ENCODE measurements at regions of chr5 and their contacts with region 1.

Region 1: DNA sequence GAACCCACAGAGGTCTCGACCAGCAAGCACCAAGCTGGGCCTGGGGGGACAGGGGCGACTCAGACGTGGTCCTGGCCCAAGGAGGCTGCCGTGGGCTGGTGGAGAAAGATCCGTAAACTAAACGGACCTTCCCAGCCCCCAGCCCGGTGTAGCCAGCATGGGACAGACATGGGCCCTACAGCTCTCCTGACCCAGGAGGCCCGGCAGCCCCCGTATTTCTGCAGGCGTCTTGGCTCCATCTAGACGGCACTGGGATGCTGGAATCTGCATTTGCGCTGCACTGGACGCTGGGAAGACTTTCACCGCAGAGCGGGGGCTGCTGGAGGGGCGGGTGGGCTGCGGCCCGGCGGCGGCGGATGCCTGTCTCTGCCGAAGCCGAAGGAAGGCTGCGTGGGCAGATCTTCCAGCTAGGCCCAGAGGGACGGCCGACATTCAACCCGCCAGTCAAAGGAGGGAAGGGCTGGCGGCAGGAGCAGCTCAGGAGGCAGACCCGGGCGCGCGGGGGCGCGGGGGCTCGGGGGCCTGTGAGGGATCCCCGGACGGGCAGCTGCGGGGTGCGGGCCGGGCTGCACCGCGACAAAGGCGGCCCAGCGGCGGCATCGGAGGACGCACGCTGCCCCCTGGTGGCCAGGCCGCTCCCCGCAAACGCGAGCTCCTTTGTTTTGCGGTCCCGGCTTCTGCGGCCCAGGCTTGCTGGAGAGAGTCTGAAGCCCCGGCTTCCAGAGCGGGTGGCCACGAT is 266.2 kb downstream of the NSG2 start:
- DNase-seq: peak; percentile 10
- ATAC-seq: peak; percentile 92
- H3K4me3 ChIP-seq: peak overlapping the region in 1 of 3 experiments; percentile 40; a peak in 1 of 6 replicates
- H3K27ac ChIP-seq: no peak overlapping the region
- H3K4me1 ChIP-seq: no peaks in the 10 kb centered on the region
- H3K27me3 ChIP-seq: peaks cover 6 to 58% of the 10 kb centered on the region in 2 experiments; a peak in 4 of 5 replicates
- CTCF ChIP-seq: peak; percentile 86
- EP300 ChIP-seq: no peak
- POLR2A ChIP-seq: no peak
- RAD21 ChIP-seq: peak; percentile 90

Region 2: GRCh38 chr5:173615884-173616576 is 695.7 kb before region 1 on chr5:
- CTCF ChIA-PET with region 1: no interaction called
- POLR2A ChIA-PET with region 1: no interaction called
- in situ Hi-C with region 1: loop called (anchors 10 kb)
- intact Hi-C with region 1: loop called (anchors 2 kb)
- DNase-seq: peak; percentile 76
- ATAC-seq: peak; percentile 78
- H3K4me3 ChIP-seq: peak overlapping the region; percentile 83 to 92 (median 86)
- H3K27ac ChIP-seq: peak overlapping the region; percentile 79
- H3K4me1 ChIP-seq: peaks cover 61% of the 10 kb centered on the region
- H3K27me3 ChIP-seq: no peaks in the 10 kb centered on the region; a peak in 1 of 5 replicates
- CTCF ChIP-seq: peak; percentile 57
- EP300 ChIP-seq: no peak
- POLR2A ChIP-seq: peak in 1 of 2 experiments; percentile 41; a peak in 1 of 4 replicates
- RAD21 ChIP-seq: no peak; the same call in 1 of the 2 replicates

Region 3: DNA sequence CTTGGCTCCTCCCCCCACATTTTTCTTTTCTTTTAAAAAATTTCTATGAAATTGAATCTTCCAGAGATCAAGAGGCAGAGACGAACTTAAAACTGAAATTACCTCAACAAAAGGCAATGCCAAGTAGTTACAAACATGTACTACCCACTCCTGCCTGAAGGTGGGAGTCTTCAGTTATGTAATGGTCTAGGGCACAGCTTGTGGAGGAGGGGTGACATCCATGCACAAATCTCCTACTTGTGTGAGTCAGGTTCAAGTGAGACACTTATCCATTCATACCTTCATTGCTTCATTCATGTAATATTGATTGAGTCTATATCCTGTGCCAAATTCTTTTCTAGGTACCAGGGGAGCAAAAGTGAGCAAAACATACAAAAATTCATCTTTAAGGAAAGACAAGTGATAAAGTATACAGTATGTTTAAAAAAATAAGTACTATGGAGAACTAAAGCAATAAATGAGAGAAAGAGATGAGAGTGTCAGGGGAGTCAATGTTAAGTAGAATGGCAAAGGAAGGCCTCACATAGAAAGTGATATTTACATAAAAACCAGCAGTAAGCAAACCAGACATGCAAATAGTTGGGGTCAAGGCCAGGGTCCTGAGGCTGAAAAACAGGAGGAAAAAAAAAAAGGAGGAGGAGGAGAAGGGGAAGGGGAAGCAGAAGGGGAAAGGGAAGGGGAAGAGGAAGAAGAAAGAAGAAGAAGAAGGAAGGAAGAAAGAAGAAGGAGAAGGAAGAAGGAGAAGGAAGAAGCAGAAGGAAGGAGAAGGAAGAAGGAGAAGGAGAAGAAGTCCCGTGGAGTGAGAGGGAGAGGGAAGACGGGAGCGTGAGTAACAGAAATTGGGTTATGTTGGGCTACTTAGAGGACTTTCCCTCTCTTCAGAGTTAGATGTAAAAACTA is 291.1 kb before region 1 on chr5:
- CTCF ChIA-PET with region 1: interaction called, 7 read pairs
- POLR2A ChIA-PET with region 1: no interaction called
- in situ Hi-C with region 1: no loop called
- intact Hi-C with region 1: loop called (anchors 1 kb)
- DNase-seq: peak; percentile 54
- ATAC-seq: peak; percentile 81
- H3K4me3 ChIP-seq: peak overlapping the region in 1 of 3 experiments; percentile 10; a peak in 1 of 6 replicates
- H3K27ac ChIP-seq: no peak overlapping the region
- H3K4me1 ChIP-seq: peaks cover 8% of the 10 kb centered on the region
- H3K27me3 ChIP-seq: no peaks in the 10 kb centered on the region; a peak in 2 of 5 replicates
- CTCF ChIP-seq: peak; percentile 78
- EP300 ChIP-seq: no peak
- POLR2A ChIP-seq: no peak
- RAD21 ChIP-seq: no peak

Region 4: GRCh38 chr5:174045470-174046025 is 266.2 kb before region 1 on chr5 and contains the start of gene NSG2:
- CTCF ChIA-PET with region 1: interaction called, 39 read pairs
- POLR2A ChIA-PET with region 1: interaction called, 3 read pairs
- in situ Hi-C with region 1: loop called (anchors 5 kb)
- intact Hi-C with region 1: loop called (anchors 1 kb)
- DNase-seq: peak; percentile 83
- ATAC-seq: peak; percentile 100
- H3K4me3 ChIP-seq: no peak within 1 kb of the TSS
- H3K27ac ChIP-seq: no peak within 1 kb of the TSS
- H3K4me1 ChIP-seq: no peaks in the 10 kb centered on the region
- H3K27me3 ChIP-seq: no peaks in the 10 kb centered on the region
- CTCF ChIP-seq: peak; percentile 93
- EP300 ChIP-seq: no peak
- POLR2A ChIP-seq: no peak
- RAD21 ChIP-seq: peak; percentile 96
- total RNA-seq, gene NSG2: not detected in 2 replicates

Region 5: GRCh38 chr5:174295702-174296436 is 15.8 kb before region 1 on chr5:
- CTCF ChIA-PET with region 1: no interaction called
- POLR2A ChIA-PET with region 1: no interaction called
- in situ Hi-C with region 1: no loop called
- intact Hi-C with region 1: no loop called
- DNase-seq: no peak
- ATAC-seq: no peak
- H3K4me3 ChIP-seq: no peak overlapping the region
- H3K27ac ChIP-seq: no peak overlapping the region
- H3K4me1 ChIP-seq: no peaks in the 10 kb centered on the region
- H3K27me3 ChIP-seq: no peaks in the 10 kb centered on the region
- CTCF ChIP-seq: no peak
- EP300 ChIP-seq: no peak
- POLR2A ChIP-seq: no peak
- RAD21 ChIP-seq: no peak

Region 6: DNA sequence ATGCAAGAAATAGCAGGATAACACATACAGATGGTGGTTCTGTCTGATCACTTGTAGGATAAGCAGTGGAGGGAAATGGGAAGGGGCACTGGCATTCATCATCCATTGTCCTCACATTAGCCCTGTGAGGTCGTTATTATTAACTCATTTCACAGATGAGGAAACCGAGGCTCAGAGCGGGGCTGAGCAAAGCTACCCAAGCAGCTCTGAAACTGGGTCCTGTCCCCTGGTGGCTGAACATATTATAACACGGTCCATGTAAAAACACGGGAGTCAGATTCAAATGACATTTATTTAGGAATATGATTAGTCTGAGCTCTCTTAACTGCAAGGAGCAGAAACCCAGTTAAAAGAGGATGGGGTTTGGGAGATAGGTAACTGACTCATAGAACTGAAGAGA is 1389.3 kb after region 1 on chr5:
- CTCF ChIA-PET with region 1: no interaction called
- POLR2A ChIA-PET with region 1: no interaction called
- in situ Hi-C with region 1: no loop called
- intact Hi-C with region 1: no loop called
- DNase-seq: no peak
- ATAC-seq: peak; percentile 34; the same call in 1 of the 3 replicates
- H3K4me3 ChIP-seq: no peak overlapping the region
- H3K27ac ChIP-seq: no peak overlapping the region
- H3K4me1 ChIP-seq: peaks cover 11% of the 10 kb centered on the region
- H3K27me3 ChIP-seq: 0 out of 5 replicates have a peak, but pooled peaks cover 0 to 9% of the 10 kb centered on the region in 2 experiments
- CTCF ChIP-seq: peak; percentile 44
- EP300 ChIP-seq: no peak
- POLR2A ChIP-seq: no peak
- RAD21 ChIP-seq: no peak

Measured in HepG2 (cell line).